Caco-2 (cell line): ENCODE measurements at regions of chr4 and their contacts with region 1.

Region 1: GRCh38 chr4:85147439-85148076 is 181.1 kb upstream of the WDFY3 start:
- DNase-seq: peak in 1 of 2 experiments; percentile 39
- H3K4me3 ChIP-seq: no peak overlapping the region
- H3K4me3 Mint-ChIP-seq: no peak overlapping the region
- H3K27ac Mint-ChIP-seq: no peak overlapping the region
- H3K4me1 ChIP-seq: no peaks in the 10 kb centered on the region
- H3K4me1 Mint-ChIP-seq: no peaks in the 10 kb centered on the region
- H3K27me3 ChIP-seq: no peaks in the 10 kb centered on the region
- H3K27me3 Mint-ChIP-seq: peaks cover 4% of the 10 kb centered on the region
- CTCF ChIP-seq: peak; percentile 39 to 46

Region 2: DNA sequence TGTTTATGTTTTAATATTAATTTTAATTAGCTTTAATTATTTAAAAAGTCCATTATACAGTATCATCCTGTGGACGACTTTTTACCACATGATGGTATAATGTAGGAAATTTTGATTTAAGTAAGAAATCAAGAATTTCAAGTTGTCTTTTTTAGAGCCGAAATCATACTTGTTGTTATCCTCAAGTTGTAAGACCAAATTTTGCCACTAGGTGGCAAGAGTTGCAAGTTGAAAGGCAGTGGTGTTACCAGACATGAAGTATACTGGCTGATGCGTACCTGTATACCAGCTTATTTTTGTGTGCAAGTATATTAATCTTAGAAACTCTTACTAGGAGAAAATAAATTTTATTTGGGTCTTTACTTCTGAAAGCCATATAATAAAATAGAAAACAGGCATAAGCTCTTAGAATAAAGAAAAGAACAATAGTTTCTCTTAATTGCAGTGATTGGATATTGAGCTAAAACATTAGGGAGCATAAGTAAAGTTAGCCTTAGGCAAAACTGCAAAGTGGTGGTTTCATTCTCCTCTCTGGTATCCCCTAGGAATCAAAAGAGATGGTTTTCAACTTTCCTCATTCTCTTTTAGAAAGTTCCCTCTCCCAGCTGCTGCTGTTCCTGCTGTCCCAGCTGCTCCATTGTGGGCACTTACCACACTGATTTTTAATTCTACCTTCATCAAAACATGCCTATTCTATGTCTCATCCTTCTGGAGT is 63.0 kb before region 1 on chr4:
- CTCF ChIA-PET with region 1: no interaction called
- POLR2A ChIA-PET with region 1: no interaction called
- intact Hi-C with region 1: loop called (anchors 5 kb)
- DNase-seq: peak in 1 of 2 experiments; percentile 62
- H3K4me3 ChIP-seq: no peak overlapping the region
- H3K4me3 Mint-ChIP-seq: no peak overlapping the region
- H3K27ac Mint-ChIP-seq: no peak overlapping the region
- H3K4me1 ChIP-seq: no peaks in the 10 kb centered on the region
- H3K4me1 Mint-ChIP-seq: no peaks in the 10 kb centered on the region
- H3K27me3 ChIP-seq: no peaks in the 10 kb centered on the region; the same call in 1 of the 2 replicates
- H3K27me3 Mint-ChIP-seq: peaks cover 4% of the 10 kb centered on the region
- CTCF ChIP-seq: peak; percentile 53 to 68

Region 3: GRCh38 chr4:85318415-85318814 is 170.9 kb after region 1 on chr4:
- CTCF ChIA-PET with region 1: no interaction called
- POLR2A ChIA-PET with region 1: no interaction called
- intact Hi-C with region 1: loop called (anchors 10 kb)
- DNase-seq: no peak
- H3K4me3 ChIP-seq: no peak overlapping the region
- H3K4me3 Mint-ChIP-seq: no peak overlapping the region
- H3K27ac Mint-ChIP-seq: no peak overlapping the region
- H3K4me1 ChIP-seq: no peaks in the 10 kb centered on the region
- H3K4me1 Mint-ChIP-seq: no peaks in the 10 kb centered on the region
- H3K27me3 ChIP-seq: no peaks in the 10 kb centered on the region
- H3K27me3 Mint-ChIP-seq: no peaks in the 10 kb centered on the region
- CTCF ChIP-seq: no peak

Region 4: DNA sequence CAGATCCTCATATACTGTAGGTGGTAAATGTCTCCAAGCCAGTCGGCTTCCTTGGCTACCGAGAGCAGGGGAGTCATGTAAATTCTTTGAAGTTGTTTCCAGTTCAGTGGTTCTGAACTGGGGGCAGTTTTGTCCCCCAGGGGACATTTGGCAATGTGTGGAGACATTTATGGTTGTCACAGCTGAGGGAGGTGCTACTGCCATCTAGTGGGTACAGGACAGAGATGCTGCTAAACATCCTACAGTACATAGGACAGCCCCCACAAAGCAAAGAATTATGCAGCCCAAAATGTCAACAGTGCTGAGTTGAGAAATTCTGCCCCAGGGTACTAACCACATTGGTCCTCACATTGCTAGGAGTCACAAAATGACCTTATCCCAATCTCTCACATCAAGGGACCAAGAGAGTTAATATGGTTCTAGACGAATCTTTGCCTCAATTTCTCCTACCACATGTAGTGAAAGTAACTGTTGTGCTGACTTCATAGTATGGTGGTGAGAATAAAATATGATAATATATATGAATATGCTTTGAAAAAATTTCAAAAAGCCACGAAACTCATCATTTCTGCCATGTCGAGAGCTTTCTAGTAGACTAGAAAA is 223.0 kb after region 1 on chr4:
- CTCF ChIA-PET with region 1: no interaction called
- POLR2A ChIA-PET with region 1: no interaction called
- intact Hi-C with region 1: loop called (anchors 1 kb)
- DNase-seq: peak; percentile 42 to 43
- H3K4me3 ChIP-seq: no peak overlapping the region
- H3K4me3 Mint-ChIP-seq: no peak overlapping the region
- H3K27ac Mint-ChIP-seq: no peak overlapping the region
- H3K4me1 ChIP-seq: no peaks in the 10 kb centered on the region
- H3K4me1 Mint-ChIP-seq: no peaks in the 10 kb centered on the region
- H3K27me3 ChIP-seq: no peaks in the 10 kb centered on the region
- H3K27me3 Mint-ChIP-seq: peaks cover 7% of the 10 kb centered on the region
- CTCF ChIP-seq: peak; percentile 54 to 73